ENCODE measurements at regions of chr14 and their contacts with region 1.

Region 1: DNA sequence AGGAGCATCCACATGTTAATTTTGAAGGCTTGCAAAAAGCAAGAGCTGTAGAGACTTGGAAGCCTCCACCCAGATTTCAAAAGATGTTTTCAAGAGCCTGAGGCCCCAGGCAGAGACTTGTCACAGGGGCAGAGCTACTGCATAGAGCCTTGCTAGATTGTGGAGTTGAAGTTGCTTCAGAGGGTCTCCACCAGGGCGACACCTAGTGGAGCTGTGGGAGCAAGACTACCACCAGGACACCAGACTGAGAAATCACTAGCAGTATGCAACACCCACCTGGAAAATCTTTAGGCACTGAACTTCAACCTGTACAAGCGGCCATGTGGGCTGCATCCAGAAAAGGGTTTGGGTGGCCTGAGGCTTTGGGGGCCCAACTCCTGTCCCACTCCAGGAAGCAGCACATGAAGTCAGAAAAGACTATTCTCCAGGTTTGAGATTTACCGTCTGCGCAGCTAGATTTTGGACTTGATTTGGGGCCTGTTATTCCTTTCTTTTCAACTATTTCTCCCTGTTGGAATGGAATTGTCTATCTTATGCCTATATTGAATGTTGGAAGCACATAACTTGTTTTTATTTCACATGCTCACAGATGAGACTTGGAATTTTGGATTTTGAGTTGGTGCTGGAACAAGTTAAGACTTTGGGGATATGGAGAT is 508.6 kb downstream of the FLRT2 start:
- DNase-seq: peak; percentile 59
- H3K4me3 Mint-ChIP-seq: no peak overlapping the region
- H3K27ac Mint-ChIP-seq: no peak overlapping the region
- H3K4me1 Mint-ChIP-seq: no peaks in the 10 kb centered on the region
- H3K27me3 Mint-ChIP-seq: no peaks in the 10 kb centered on the region
- CTCF ChIP-seq: peak; percentile 63

Region 2: GRCh38 chr14:85634205-85634604 is 404.3 kb before region 1 on chr14:
- CTCF ChIA-PET with region 1: no interaction called
- POLR2A ChIA-PET with region 1: no interaction called
- intact Hi-C with region 1: loop called (anchors 10 kb)
- DNase-seq: no peak
- H3K4me3 Mint-ChIP-seq: no peak overlapping the region
- H3K27ac Mint-ChIP-seq: no peak overlapping the region
- H3K4me1 Mint-ChIP-seq: no peaks in the 10 kb centered on the region
- H3K27me3 Mint-ChIP-seq: no peaks in the 10 kb centered on the region
- CTCF ChIP-seq: no peak